Psoas muscle (tissue), 8 donors: ENCODE measurements at regions of chr1 and their contacts with region 1.

Region 1: GRCh38 chr1:155167166-155168104 is 5.7 kb downstream of the KRTCAP2 start:
- DNase-seq: peak; percentile 90 to 94
- ATAC-seq: peak; percentile 77 to 88 (median 84)
- H3K4me3 ChIP-seq: peak overlapping the region; percentile 12
- H3K27ac ChIP-seq: peak overlapping the region; percentile 55
- H3K4me1 ChIP-seq: peaks cover 16% of the 10 kb centered on the region
- H3K27me3 ChIP-seq: peaks cover 0 to 7% (median 0%) of the 10 kb centered on the region in 3 donors
- CTCF ChIP-seq: peak; percentile 86

Region 2: DNA sequence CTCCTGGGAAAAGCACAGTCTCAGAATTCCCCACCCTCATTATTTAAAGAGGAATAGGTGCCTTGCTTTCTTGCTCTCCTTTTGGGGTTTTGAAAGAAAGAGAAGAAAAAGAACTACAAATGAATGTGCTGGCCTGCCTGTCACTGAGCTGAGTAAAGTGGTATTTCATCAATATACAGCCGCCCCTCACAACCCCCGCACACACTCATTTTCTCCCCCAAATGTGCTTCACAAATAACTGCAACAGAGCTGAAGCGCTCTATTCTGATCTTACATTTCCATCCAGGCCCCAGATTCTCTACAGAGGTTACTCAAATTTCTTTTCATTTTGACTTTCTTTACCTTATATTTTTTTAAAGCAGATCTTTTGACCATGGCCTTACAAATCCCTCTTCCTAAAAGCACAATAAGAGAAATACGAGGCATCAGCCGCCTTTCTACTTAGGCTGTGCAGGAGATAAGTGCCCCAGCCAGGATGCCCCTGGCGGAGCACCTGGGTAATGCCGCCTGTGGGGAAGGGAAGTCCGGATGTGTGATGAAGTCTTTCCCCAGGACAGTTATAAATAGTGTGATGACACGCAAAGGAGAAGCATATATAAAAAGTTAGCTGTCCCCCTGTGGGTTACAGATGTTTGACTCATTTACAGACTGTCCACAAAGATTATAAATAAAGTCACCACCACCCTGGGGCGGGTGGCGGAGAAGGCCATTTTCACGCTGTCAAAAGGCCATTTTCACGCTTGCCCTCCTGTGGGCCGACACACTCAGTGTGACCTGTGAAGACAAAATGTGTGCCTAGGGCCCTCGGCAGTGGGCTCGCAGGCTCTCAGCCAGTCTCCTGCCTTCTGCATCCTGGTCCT is 303.9 kb before region 1 on chr1:
- intact Hi-C with region 1: no loop called
- DNase-seq: peak; percentile 80 to 90
- ATAC-seq: peak; percentile 49 to 61 (median 57)
- H3K4me3 ChIP-seq: peak overlapping the region; percentile 91
- H3K27ac ChIP-seq: peak overlapping the region; percentile 96
- H3K4me1 ChIP-seq: peaks cover 71% of the 10 kb centered on the region
- H3K27me3 ChIP-seq: no peaks in the 10 kb centered on the region
- CTCF ChIP-seq: peak; percentile 88

Region 3: GRCh38 chr1:155127105-155127964 is 40.1 kb before region 1 on chr1 and contains the start of gene EFNA1:
- intact Hi-C with region 1: loop called in 1 of 2 experiments (anchors 5 kb)
- DNase-seq: peak; percentile 70 to 77
- ATAC-seq: peak; percentile 46 to 64 (median 51)
- H3K4me3 ChIP-seq: peak within 1 kb of the TSS; percentile 74
- H3K27ac ChIP-seq: peak within 1 kb of the TSS; percentile 72
- H3K4me1 ChIP-seq: peaks cover 24% of the 10 kb centered on the region
- H3K27me3 ChIP-seq: peaks cover 0 to 31% (median 0%) of the 10 kb centered on the region in 3 donors
- CTCF ChIP-seq: no peak
- total RNA-seq, gene EFNA1: 11.4 to 42.6 (median 33.0) TPM